HepG2 (cell line): ENCODE measurements at regions of chr7 and their contacts with region 1.

Region 1: DNA sequence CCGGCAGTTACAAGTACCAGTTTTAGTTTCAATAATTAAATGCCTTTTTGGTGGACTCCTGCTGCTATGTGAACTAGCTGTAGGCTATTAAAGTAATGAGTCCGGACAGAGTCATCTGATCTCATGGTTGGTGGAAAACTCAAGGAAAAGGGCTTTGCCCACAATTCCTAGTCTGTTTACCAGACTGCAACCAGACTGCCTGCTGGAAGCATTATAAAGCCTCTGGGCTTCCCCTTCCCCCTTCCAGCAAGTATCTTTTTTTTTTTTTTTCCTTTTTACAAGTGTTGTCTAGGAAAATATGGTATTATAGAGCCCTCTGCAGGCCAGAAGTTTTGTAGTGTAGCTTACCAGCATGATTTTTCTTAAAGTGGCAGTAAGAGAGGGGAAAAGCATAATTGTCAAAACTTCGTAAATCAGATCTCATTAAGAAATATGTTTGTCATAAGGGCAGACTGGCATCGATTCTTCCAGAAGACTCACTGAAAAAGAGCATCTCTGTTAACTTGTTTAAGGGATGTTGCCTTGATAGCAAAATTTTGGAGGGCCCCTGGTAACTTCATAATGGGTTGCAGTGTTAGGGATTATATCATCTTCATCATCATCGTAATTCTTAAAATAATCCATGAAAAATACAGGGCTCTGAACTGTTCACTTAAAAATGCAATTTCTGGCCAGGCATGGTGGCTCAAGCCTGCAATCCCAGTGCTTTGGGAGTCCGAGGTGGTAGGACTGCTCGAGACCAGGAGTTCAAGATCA is 181.3 kb downstream of the TAX1BP1 start:
- DNase-seq: peak; percentile 70
- ATAC-seq: peak; percentile 71
- H3K4me3 ChIP-seq: no peak overlapping the region
- H3K27ac ChIP-seq: no peak overlapping the region
- H3K4me1 ChIP-seq: no peaks in the 10 kb centered on the region
- H3K27me3 ChIP-seq: peaks cover 0 to 22% of the 10 kb centered on the region in 2 experiments; a peak in 4 of 5 replicates
- CTCF ChIP-seq: peak; percentile 62
- EP300 ChIP-seq: no peak
- POLR2A ChIP-seq: no peak
- RAD21 ChIP-seq: no peak

Region 2: GRCh38 chr7:27210441-27211083 is 710.7 kb before region 1 on chr7:
- CTCF ChIA-PET with region 1: interaction called, 14 read pairs
- POLR2A ChIA-PET with region 1: no interaction called
- in situ Hi-C with region 1: no loop called
- intact Hi-C with region 1: no loop called
- DNase-seq: no peak
- ATAC-seq: peak; percentile 74
- H3K4me3 ChIP-seq: peak overlapping the region; percentile 23 to 56 (median 51); a peak in 3 of 6 replicates
- H3K27ac ChIP-seq: no peak overlapping the region
- H3K4me1 ChIP-seq: peaks cover 15% of the 10 kb centered on the region
- H3K27me3 ChIP-seq: peaks cover 0 to 80% of the 10 kb centered on the region in 2 experiments; a peak in 4 of 5 replicates
- CTCF ChIP-seq: peak; percentile 70
- EP300 ChIP-seq: no peak
- POLR2A ChIP-seq: no peak
- RAD21 ChIP-seq: 0 out of 2 replicates have a peak, but pooled peaks have one; percentile 19

Region 3: DNA sequence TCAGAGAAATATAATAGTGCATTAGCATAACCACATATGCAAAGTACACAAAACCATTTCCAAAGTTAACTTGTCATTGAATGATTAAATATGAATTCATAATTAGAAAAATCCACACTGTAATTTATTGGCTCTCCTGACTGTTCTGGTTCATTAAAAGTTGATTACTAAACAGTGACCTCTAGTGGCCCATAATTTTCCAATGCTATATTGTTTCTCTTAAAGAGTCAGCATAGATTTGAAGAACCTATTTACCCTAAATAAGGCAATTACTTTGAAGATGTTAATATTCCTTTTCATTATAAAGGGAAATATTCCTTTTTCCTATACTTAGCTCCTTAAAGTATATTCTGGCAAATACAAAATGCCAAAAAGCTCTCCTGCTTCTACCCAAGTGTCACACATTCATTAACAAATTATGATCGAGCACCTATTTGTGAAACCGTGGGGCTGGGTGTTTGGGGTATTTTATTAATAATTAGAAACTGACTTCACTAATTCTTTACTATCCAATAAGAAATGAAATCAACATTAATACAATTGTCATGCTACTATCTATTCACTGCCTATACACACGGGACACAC is 344.8 kb before region 1 on chr7:
- CTCF ChIA-PET with region 1: no interaction called
- POLR2A ChIA-PET with region 1: no interaction called
- in situ Hi-C with region 1: no loop called
- intact Hi-C with region 1: loop called (anchors 5 kb)
- DNase-seq: peak; percentile 21
- ATAC-seq: no peak
- H3K4me3 ChIP-seq: no peak overlapping the region
- H3K27ac ChIP-seq: no peak overlapping the region
- H3K4me1 ChIP-seq: peaks cover 27% of the 10 kb centered on the region
- H3K27me3 ChIP-seq: no peaks in the 10 kb centered on the region
- CTCF ChIP-seq: peak; percentile 52
- EP300 ChIP-seq: no peak
- POLR2A ChIP-seq: no peak
- RAD21 ChIP-seq: no peak

Region 4: DNA sequence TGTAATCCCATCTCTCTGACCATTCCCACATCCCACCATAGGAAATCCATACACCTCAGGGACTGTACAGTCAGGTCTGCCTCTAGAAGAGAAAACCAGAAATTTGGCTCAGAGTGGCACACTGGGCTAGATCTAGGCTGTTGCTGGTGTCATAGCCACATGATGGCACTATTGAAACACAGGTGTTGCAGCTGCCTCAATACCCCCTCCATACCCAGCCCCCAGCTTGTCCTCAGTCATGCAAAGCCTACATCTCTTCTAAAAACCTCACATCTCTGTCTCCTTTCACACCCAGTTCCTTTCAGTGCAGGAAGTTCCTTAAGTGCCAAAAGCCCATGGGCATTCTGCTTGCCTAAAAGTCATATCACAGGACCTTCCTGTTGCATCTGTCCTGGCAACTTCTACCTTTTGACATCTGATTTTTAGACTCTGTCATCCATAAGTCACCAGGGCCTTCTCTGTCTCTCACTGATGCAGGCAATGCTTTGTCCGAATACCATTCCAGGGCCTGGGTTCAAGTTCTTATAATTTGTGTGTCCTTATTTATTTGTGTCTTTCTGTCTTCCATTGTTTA is 231.6 kb before region 1 on chr7:
- CTCF ChIA-PET with region 1: no interaction called
- POLR2A ChIA-PET with region 1: no interaction called
- in situ Hi-C with region 1: loop called (anchors 10 kb)
- intact Hi-C with region 1: loop called (anchors 1 kb)
- DNase-seq: peak; percentile 35
- ATAC-seq: peak; percentile 92
- H3K4me3 ChIP-seq: no peak overlapping the region
- H3K27ac ChIP-seq: no peak overlapping the region
- H3K4me1 ChIP-seq: peaks cover 40% of the 10 kb centered on the region
- H3K27me3 ChIP-seq: no peaks in the 10 kb centered on the region
- CTCF ChIP-seq: peak; percentile 87
- EP300 ChIP-seq: no peak
- POLR2A ChIP-seq: no peak
- RAD21 ChIP-seq: peak; percentile 76

Region 5: GRCh38 chr7:28020302-28020940 is 99.2 kb after region 1 on chr7:
- CTCF ChIA-PET with region 1: interaction called, 3 read pairs
- POLR2A ChIA-PET with region 1: no interaction called
- in situ Hi-C with region 1: no loop called
- intact Hi-C with region 1: loop called (anchors 5 kb)
- DNase-seq: peak; percentile 66
- ATAC-seq: peak; percentile 97
- H3K4me3 ChIP-seq: no peak overlapping the region
- H3K27ac ChIP-seq: no peak overlapping the region
- H3K4me1 ChIP-seq: no peaks in the 10 kb centered on the region
- H3K27me3 ChIP-seq: peaks cover 2 to 50% of the 10 kb centered on the region in 2 experiments; a peak in 4 of 5 replicates
- CTCF ChIP-seq: peak; percentile 94
- EP300 ChIP-seq: no peak
- POLR2A ChIP-seq: no peak
- RAD21 ChIP-seq: peak; percentile 76

Region 6: DNA sequence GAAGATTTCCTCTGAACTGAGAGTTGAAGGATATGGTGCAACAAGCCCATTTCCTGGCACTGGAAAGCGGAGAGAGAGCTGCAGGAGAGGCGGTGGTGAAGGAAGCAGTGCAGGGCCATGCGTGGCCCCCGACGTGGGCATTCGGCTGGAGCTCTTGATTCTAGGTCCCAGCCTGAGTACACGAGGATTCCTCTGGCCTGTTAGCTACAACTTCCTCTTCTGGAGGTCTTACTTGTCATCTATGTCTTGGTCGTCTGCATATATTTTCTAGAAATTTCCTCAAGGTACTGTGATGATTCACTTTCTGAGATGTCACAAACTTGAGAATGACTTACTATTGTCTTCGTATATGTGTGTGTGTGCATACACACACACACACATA is 318.6 kb after region 1 on chr7:
- CTCF ChIA-PET with region 1: no interaction called
- POLR2A ChIA-PET with region 1: no interaction called
- in situ Hi-C with region 1: no loop called
- intact Hi-C with region 1: no loop called
- DNase-seq: no peak
- ATAC-seq: no peak
- H3K4me3 ChIP-seq: no peak overlapping the region
- H3K27ac ChIP-seq: no peak overlapping the region
- H3K4me1 ChIP-seq: no peaks in the 10 kb centered on the region
- H3K27me3 ChIP-seq: no peaks in the 10 kb centered on the region
- CTCF ChIP-seq: no peak
- EP300 ChIP-seq: no peak
- POLR2A ChIP-seq: no peak
- RAD21 ChIP-seq: no peak